Heart right ventricle (tissue), 16 donors: ENCODE measurements at regions of chr1 and their contacts with region 1.

Region 1: GRCh38 chr1:28518000-28518744 is 12.3 kb downstream of the RCC1 start:
- DNase-seq: peak; percentile 88 to 92
- ATAC-seq: peak; percentile 91 to 96 (median 95)
- H3K4me3 ChIP-seq: peak overlapping the region; percentile 19 to 84 (median 67)
- H3K27ac ChIP-seq: peak overlapping the region in 9 of 10 donors; percentile 56 to 92 (median 80)
- H3K4me1 ChIP-seq: peaks cover 2 to 21% (median 13%) of the 10 kb centered on the region in 9 donors
- H3K27me3 ChIP-seq: no peaks in the 10 kb centered on the region
- CTCF ChIP-seq: peak; percentile 91 to 100 (median 99)

Region 2: DNA sequence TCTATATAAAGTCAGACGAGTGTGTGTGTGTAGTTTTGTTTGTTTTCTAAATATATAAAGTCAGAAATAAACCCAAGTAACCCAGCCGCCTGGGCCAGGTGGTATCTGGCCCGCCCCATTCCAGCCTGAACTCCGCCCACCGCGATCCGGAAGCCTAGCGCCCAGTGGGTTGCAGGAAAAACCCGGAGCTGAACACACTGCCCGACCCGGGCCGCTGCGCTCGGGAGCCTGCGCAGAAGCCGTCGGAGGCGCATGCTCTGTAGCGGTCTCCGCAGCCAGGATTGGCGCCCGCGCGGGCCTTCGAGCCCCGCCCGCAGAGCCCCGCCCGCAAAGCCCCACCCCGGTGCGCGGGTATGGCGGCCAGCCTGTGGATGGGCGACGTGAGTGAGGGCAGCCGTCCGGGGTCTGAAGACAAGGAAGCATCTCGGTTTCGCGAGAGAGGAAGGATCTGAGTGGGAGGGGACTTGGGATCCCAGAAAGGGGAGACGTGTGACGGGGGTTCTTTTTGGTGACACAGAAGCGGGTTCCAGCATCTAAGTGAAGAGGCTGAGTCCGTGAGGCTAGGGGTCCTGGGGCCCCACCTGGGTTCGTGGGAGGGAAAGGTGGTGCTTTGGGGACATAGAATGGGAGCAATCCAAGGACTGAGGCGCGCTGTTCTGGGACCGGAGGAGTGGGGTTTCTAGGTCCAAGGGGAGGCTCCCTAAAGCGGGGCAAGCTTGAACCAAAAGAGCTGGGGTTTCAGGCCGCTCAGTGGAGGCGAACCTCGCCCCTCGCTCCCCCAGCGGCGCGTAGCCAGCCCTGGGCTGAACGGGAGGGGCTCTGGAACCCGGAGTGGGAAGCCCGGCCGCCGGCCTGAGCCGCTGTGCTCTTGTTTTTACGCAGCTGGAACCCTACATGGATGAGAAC is 34.8 kb after region 1 on chr1 and contains the start of gene TRNAU1AP:
- intact Hi-C with region 1: loop called in 2 of 10 experiments (anchors 5 kb)
- DNase-seq: peak; percentile 97
- ATAC-seq: peak; percentile 98 to 99 (median 99)
- H3K4me3 ChIP-seq: peak within 1 kb of the TSS; percentile 66 to 96 (median 88)
- H3K27ac ChIP-seq: peak within 1 kb of the TSS; percentile 43 to 92 (median 86)
- H3K4me1 ChIP-seq: peaks cover 0 to 25% (median 10%) of the 10 kb centered on the region in 9 donors
- H3K27me3 ChIP-seq: no peaks in the 10 kb centered on the region
- CTCF ChIP-seq: peak in 1 of 9 donors; percentile 3
- total RNA-seq, gene TRNAU1AP: 13.1 to 21.2 (median 15.2) TPM

Region 3: GRCh38 chr1:28591708-28592320 is 73.6 kb after region 1 on chr1 and contains the start of gene RAB42:
- intact Hi-C with region 1: loop called in 2 of 10 experiments (anchors 2 to 10 kb)
- DNase-seq: peak; percentile 35 to 42
- ATAC-seq: peak; percentile 38 to 76 (median 56)
- H3K4me3 ChIP-seq: peak within 1 kb of the TSS in 9 of 10 donors; percentile 46 to 67 (median 58)
- H3K27ac ChIP-seq: peak within 1 kb of the TSS in 4 of 10 donors; percentile 14 to 75 (median 52)
- H3K4me1 ChIP-seq: peaks cover 0 to 32% (median 5%) of the 10 kb centered on the region in 9 donors
- H3K27me3 ChIP-seq: no peaks in the 10 kb centered on the region
- CTCF ChIP-seq: no peak
- total RNA-seq, gene RAB42: 0.17 to 3.4 (median 0.50) TPM

Region 4: DNA sequence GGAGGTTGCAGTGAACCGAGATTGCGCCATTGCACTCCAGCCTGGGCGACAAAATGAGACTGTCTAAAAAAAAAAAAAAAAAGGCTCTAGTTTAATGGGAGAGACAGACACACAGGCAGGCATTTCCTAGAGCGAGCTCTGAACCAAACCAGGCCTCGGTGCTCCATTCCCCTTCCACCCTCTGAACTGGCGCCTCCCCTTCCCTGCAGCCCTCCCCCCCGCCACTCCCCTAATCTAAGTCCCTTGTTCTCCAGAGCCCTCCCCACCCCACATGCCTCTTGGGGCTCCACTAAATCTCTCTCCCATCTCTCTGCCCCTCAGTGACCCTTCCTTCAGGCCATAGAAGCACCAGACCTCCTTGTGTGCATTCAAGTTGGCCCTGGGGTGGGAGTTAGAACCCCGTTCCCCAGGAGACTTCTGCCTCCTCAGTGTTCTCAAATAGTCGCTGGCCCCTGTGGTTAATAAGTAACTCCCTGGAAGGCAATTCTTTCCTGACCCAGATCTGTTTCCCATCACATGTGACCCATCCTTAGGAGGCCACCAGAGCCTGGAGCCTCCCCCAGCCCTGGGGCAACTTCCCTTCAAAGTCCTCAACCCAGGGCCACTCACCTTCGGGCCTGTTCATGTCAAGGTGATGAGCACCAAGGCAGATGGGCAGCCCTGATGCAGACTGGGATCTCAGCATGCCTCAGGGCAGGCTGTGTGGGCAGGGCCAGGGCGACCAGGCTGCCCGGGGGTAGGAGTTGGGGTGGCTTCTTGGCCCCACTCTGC is 353.6 kb after region 1 on chr1:
- intact Hi-C with region 1: loop called in 9 of 10 experiments (anchors 2 to 10 kb)
- DNase-seq: no peak
- ATAC-seq: no peak
- H3K4me3 ChIP-seq: no peak overlapping the region
- H3K27ac ChIP-seq: no peak overlapping the region
- H3K4me1 ChIP-seq: no peaks in the 10 kb centered on the region
- H3K27me3 ChIP-seq: peaks cover 0 to 41% (median 19%) of the 10 kb centered on the region in 7 donors
- CTCF ChIP-seq: no peak

Region 5: DNA sequence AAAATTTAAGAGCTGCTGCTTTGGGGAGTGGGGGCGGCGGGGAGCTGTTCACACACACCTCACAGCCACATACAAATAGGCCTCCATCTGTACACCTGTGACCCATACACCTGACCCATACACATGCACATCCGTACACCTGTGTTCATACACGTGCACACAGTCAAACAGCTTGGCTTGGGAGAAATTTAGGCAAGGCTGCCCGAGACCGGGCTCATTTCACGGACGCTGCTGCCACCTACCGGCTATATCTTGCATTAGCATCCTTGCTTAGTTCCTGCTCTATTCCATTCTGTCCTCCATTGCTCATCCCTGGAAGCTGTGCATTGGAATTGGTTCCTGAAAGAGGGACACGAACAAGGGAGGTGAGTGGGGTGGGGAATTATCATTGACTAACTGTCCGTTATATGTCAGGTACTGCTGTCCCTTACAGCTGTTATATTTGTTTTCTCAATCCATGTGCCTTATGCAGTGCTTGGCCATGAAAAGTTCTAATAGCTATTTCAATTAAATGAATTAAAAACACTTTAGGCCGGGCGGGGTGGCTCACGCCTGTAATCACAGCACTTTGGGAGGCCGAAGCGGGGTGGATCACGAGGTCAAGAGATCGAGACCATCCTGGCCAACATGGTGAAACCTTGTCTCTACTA is 359.1 kb after region 1 on chr1:
- intact Hi-C with region 1: loop called in 9 of 10 experiments (anchors 2 to 10 kb)
- DNase-seq: peak; percentile 68 to 73
- ATAC-seq: peak; percentile 70 to 86 (median 84)
- H3K4me3 ChIP-seq: no peak overlapping the region
- H3K27ac ChIP-seq: no peak overlapping the region
- H3K4me1 ChIP-seq: peaks cover 0 to 5% (median 0%) of the 10 kb centered on the region in 9 donors
- H3K27me3 ChIP-seq: peaks cover 0 to 25% (median 7%) of the 10 kb centered on the region in 7 donors
- CTCF ChIP-seq: peak; percentile 87 to 95 (median 93)